ENCODE measurements at regions of chr1 and their contacts with region 1.

Region 1: DNA sequence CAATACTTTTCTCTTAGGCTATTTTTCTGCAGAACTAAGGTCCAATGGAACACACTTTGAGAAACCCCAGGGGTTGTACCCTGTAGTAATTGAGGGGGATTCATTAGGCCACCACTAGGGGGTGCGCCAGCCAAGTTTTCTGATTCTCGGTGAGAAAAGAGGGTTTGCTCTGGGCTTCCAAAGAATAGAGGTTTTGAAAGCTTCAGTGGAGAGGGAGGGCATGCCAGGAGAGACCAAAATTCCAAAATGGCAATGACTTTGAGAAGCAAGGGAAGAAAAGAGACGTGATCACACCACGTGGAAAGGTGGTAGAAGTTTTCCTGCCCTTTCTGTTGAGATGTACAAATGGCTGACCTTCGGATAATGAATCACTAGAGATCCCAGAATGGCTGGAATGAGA is 323.3 kb downstream of the RPS6KC1 start:
- DNase-seq: peak; percentile 90
- H3K4me3 Mint-ChIP-seq: no peak overlapping the region
- H3K27ac Mint-ChIP-seq: no peak overlapping the region
- H3K4me1 Mint-ChIP-seq: peaks cover 10% of the 10 kb centered on the region
- H3K27me3 Mint-ChIP-seq: no peaks in the 10 kb centered on the region
- CTCF ChIP-seq: peak; percentile 83

Region 2: DNA sequence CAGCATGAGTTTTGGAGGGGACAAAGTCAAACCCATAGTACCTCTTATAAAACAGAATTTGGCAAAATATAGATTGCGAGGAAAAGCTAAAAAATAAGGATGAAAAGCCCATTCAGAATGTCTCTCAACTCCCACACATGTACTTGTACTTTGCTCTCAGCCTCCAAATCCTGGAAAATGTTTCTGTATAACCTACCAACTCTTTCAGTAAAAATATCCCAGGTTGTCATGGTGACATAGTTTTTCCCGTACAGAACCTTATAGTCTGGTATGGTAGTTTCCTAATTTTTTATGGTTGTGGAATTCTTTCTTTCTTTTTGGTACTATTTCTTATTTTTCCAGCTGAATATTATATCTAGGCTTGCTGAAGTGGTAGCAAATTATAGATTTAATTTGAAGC is 338.8 kb before region 1 on chr1:
- CTCF ChIA-PET with region 1: no interaction called
- intact Hi-C with region 1: no loop called
- DNase-seq: no peak
- H3K4me3 Mint-ChIP-seq: no peak overlapping the region
- H3K27ac Mint-ChIP-seq: no peak overlapping the region
- H3K4me1 Mint-ChIP-seq: no peaks in the 10 kb centered on the region
- H3K27me3 Mint-ChIP-seq: peaks cover 16% of the 10 kb centered on the region
- CTCF ChIP-seq: no peak

Region 3: GRCh38 chr1:213320191-213320870 is 54.0 kb before region 1 on chr1:
- CTCF ChIA-PET with region 1: no interaction called
- intact Hi-C with region 1: no loop called
- DNase-seq: no peak
- H3K4me3 Mint-ChIP-seq: no peak overlapping the region
- H3K27ac Mint-ChIP-seq: no peak overlapping the region
- H3K4me1 Mint-ChIP-seq: no peaks in the 10 kb centered on the region
- H3K27me3 Mint-ChIP-seq: no peaks in the 10 kb centered on the region
- CTCF ChIP-seq: no peak

Region 4: DNA sequence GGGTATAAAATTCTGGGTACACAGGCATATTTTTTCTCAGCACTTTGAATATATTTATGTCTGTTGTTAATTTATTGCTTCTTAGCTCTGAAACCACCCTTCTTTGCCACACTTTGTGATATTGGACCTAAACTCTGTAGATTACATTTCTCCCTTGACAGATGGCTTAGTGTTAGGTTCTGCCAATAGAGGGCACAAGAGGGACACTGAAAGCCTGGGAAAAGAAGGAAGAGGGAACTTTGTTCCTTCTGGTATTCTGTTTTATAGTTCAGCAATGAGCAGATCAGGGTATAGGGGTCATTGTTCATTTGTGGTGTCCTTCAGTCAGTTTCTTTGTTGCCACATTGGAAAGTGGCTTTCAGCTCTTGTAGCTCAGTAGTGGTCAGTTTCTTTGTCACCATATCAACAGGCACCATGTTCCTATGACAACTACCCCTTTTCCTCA is 189.9 kb after region 1 on chr1:
- CTCF ChIA-PET with region 1: no interaction called
- intact Hi-C with region 1: loop called (anchors 5 kb)
- DNase-seq: peak; percentile 24
- H3K4me3 Mint-ChIP-seq: no peak overlapping the region
- H3K27ac Mint-ChIP-seq: no peak overlapping the region
- H3K4me1 Mint-ChIP-seq: no peaks in the 10 kb centered on the region
- H3K27me3 Mint-ChIP-seq: no peaks in the 10 kb centered on the region
- CTCF ChIP-seq: peak; percentile 18

Measured in Calu3 (cell line).